ENCODE measurements at regions of chr12 and their contacts with region 1.

Region 1: GRCh38 chr12:120914794-120915193 is 10.6 kb upstream of the SPPL3 start:
- DNase-seq: peak; percentile 90
- H3K4me3 Mint-ChIP-seq: no peak overlapping the region
- H3K27ac Mint-ChIP-seq: no peak overlapping the region
- H3K4me1 Mint-ChIP-seq: no peaks in the 10 kb centered on the region
- H3K27me3 Mint-ChIP-seq: no peaks in the 10 kb centered on the region
- CTCF ChIP-seq: no peak

Region 2: GRCh38 chr12:120925740-120926583 is 11.2 kb after region 1 on chr12:
- CTCF ChIA-PET with region 1: interaction called, 3 read pairs
- POLR2A ChIA-PET with region 1: interaction called, 13 read pairs
- intact Hi-C with region 1: no loop called
- DNase-seq: peak; percentile 97
- H3K4me3 Mint-ChIP-seq: peak overlapping the region; percentile 7
- H3K27ac Mint-ChIP-seq: peak overlapping the region; percentile 84
- H3K4me1 Mint-ChIP-seq: peaks cover 12% of the 10 kb centered on the region
- H3K27me3 Mint-ChIP-seq: no peaks in the 10 kb centered on the region
- CTCF ChIP-seq: no peak

Measured in MCF 10A (cell line).